ENCODE measurements at regions of chr3 and their contacts with region 1.

Region 1: GRCh38 chr3:79032686-79033318 is 735.0 kb downstream of the ROBO1 start:
- DNase-seq: peak; percentile 15
- H3K4me3 ChIP-seq: no peak overlapping the region
- H3K27ac ChIP-seq: no peak overlapping the region
- H3K4me1 ChIP-seq: no peaks in the 10 kb centered on the region
- H3K27me3 ChIP-seq: no peaks in the 10 kb centered on the region
- CTCF ChIP-seq: peak; percentile 10 to 83 (median 72)
- POLR2A ChIP-seq: no peak

Region 2: GRCh38 chr3:78660957-78661356 is 371.8 kb before region 1 on chr3:
- intact Hi-C with region 1: loop called (anchors 2 kb)
- DNase-seq: no peak
- H3K4me3 ChIP-seq: no peak overlapping the region
- H3K27ac ChIP-seq: no peak overlapping the region
- H3K4me1 ChIP-seq: no peaks in the 10 kb centered on the region
- H3K27me3 ChIP-seq: no peaks in the 10 kb centered on the region
- CTCF ChIP-seq: no peak
- POLR2A ChIP-seq: no peak

Measured in prostate gland (tissue), 2 donors.